PC-3 (cell line): ENCODE measurements at regions of chr14 and their contacts with region 1.

Region 1: DNA sequence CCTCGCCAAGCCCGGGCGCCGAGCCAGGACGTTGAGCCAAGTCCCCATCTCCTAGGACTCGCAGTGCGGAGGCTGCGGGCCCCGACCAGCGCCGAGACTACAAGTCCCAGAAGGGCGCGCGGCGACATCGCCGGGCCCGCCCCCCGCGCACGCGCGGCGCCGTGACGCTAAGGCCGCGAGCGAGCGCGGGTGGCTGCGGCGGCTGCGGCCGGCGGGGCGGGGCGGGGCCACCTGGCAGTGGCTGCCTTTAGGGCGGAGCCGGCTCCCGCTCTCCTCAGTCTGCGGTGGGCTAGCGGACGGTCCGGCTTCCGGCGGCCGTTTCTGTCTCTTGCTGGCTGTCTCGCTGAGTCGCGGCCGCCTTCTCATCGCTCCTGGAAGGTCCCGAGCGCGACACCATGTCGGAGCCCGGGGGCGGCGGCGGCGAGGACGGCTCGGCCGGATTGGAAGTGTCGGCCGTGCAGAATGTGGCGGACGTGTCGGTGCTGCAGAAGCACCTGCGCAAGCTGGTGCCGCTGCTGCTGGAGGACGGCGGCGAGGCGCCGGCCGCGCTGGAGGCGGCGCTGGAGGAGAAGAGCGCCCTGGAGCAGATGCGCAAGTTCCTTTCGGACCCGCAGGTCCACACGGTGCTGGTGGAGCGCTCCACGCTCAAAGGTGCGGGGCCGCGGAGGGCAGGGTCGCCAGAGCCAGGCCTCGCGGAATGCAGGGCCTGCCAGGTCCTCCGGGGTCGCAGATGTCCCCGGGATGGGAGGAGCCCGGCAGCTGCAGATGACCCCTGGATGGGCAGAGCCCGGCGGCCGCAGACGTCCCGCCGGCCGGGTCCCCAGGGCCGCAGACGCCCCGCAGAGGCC is at the start of gene DYNC1H1:
- DNase-seq: peak; percentile 95
- ATAC-seq: peak; percentile 78
- H3K4me3 ChIP-seq: peak within 1 kb of the TSS; percentile 81
- H3K27ac ChIP-seq: peak within 1 kb of the TSS; percentile 56
- H3K4me1 ChIP-seq: peaks cover 43% of the 10 kb centered on the region
- H3K27me3 ChIP-seq: no peaks in the 10 kb centered on the region
- CTCF ChIP-seq: no peak
- total RNA-seq, gene DYNC1H1: 606 and 701 TPM in 2 replicates

Region 2: GRCh38 chr14:101980251-101981099 is 16.0 kb after region 1 on chr14:
- CTCF ChIA-PET with region 1: interaction called, 3 read pairs
- POLR2A ChIA-PET with region 1: interaction called, 4 read pairs
- intact Hi-C with region 1: loop called (anchors 2 kb)
- DNase-seq: peak; percentile 98
- ATAC-seq: peak; percentile 88
- H3K4me3 ChIP-seq: peak overlapping the region; percentile 40
- H3K27ac ChIP-seq: peak overlapping the region; percentile 85
- H3K4me1 ChIP-seq: peaks cover 51% of the 10 kb centered on the region
- H3K27me3 ChIP-seq: no peaks in the 10 kb centered on the region
- CTCF ChIP-seq: no peak

Region 3: DNA sequence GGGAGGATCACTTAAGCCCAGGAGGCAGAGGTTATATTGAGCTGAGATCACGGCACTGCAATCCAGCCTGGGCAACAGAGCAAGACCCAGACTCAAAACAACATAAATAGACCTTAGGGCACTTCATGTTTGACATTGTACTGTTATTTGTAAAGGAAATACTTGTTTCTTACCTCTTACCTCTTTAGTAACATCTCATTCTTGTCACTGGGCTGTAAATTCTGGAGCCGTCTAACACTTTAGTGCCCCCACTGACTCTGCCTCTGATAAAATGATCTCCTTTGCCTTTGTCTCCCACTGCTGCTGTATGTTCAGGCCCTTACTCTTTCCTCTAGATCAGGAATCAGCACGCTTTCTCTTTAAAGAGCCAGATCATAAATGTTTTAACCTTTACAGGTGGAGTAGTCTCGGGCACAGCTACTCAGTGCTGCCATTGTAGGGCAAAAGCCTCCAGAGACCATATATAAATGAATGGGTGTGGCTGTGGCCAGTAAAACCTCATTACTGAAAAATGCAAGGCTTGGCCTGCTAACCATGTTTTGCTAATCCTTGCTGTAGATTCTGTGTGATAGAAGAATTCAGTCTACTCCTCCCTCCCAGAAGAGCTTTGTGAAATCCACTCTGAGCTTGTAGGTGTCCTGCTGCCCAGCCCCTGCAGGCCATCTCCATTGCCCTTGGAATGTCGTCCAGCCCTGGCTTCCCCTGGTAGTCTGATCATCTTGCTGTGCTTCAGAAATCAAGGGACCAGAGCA is 64.1 kb after region 1 on chr14:
- CTCF ChIA-PET with region 1: no interaction called
- POLR2A ChIA-PET with region 1: no interaction called
- intact Hi-C with region 1: loop called (anchors 5 kb)
- DNase-seq: peak; percentile 96
- ATAC-seq: peak; percentile 91
- H3K4me3 ChIP-seq: peak overlapping the region; percentile 25
- H3K27ac ChIP-seq: peak overlapping the region; percentile 83
- H3K4me1 ChIP-seq: peaks cover 43% of the 10 kb centered on the region
- H3K27me3 ChIP-seq: no peaks in the 10 kb centered on the region
- CTCF ChIP-seq: no peak

Region 4: DNA sequence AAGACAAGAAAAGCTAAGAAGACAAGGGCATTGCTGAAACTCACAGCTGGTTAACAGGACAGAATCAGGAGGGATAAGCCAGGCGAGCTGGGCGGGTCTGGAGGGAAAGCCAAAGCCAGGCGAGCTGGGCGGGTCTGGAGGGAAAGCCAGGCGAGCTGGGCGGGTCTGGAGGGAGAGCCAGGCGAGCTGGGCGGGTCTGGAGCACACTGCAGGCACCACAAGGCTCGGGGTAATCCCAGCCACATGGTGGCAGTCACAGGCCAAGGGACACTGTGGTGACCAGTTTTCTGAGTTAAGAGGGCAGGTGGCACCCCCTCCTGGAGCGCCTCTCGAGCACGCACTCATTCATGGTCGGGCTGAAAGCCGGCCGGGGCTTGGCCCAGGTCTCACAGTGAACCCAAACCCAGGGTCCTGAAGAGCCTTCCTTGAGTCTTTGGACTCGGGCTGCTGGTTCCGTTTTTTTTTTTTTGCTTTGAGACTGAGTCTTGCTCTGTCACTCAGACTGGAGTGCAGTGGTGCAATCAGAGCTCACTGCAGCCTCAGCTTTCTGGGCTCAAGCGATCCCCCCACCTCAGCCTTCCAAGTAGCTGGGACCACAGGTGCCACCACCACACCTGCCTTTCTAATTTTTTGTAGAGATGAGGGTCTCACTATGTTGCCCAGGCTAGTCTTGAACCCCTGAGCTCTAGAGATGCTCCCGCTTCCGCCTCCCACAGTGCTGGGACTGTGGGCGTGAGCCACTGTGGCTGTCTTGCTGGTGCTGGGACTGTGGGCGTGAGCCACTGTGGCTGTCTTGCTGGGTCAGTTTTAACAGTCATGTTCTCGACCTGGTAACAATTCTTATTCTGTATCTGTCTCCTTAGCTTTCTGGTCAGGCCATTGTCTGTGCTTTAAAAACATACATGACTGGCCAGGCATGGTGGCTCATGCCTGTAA is 82.1 kb after region 1 on chr14:
- CTCF ChIA-PET with region 1: interaction called, 4 read pairs
- POLR2A ChIA-PET with region 1: no interaction called
- intact Hi-C with region 1: loop called (anchors 1 kb)
- DNase-seq: peak; percentile 71
- ATAC-seq: peak; percentile 95
- H3K4me3 ChIP-seq: no peak overlapping the region
- H3K27ac ChIP-seq: no peak overlapping the region
- H3K4me1 ChIP-seq: no peaks in the 10 kb centered on the region
- H3K27me3 ChIP-seq: no peaks in the 10 kb centered on the region
- CTCF ChIP-seq: peak; percentile 63

Region 5: DNA sequence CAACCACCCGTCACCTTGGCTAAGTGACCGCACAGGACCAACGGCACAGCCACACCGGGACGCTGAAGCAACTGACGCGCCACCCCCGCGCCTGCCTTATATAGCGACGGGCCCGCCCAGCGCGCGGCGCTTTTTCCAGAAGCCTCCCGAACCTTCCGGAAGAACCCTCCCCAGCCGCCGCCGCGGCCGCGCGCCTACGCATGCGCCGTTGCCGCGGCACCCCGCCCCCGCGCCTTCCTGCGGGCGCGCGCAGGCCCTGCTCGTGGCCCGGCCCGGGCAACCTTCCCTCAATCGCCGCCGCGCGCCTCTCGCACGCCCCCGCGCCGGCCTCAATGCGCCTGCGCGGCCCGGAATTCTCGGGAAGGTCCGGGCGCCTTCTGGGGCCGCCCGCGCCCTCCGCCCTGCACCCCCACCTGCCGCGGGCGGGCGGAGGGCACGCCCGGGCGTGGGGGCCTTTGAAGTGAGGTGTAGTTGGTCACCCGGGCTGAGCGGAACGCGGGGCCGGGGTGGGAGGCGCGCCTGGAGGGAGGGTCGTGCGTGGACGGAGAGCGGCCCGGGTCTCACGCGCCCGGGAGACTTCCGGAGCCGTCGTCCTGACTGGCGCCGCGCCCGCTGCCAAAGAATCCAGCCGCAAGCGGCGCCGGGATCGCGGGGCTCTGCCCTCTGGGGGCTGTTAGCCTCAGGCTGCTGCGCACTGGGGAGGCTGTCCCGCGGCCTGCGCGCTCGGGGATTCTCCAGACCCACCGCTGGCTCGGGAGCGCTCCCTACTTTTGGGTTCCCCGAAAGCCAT is 122.6 kb after region 1 on chr14 and contains the start of gene HSP90AA1:
- CTCF ChIA-PET with region 1: no interaction called
- POLR2A ChIA-PET with region 1: interaction called, 12 read pairs
- intact Hi-C with region 1: no loop called
- DNase-seq: peak; percentile 96
- ATAC-seq: peak; percentile 78
- H3K4me3 ChIP-seq: peak within 1 kb of the TSS; percentile 86
- H3K27ac ChIP-seq: peak within 1 kb of the TSS; percentile 79
- H3K4me1 ChIP-seq: peaks cover 28% of the 10 kb centered on the region
- H3K27me3 ChIP-seq: no peaks in the 10 kb centered on the region
- CTCF ChIP-seq: 0 out of 2 replicates have a peak, but pooled peaks have one; percentile 16
- total RNA-seq, gene HSP90AA1: 671 and 785 TPM in 2 replicates

Region 6: GRCh38 chr14:102096214-102097114 is 131.9 kb after region 1 on chr14:
- CTCF ChIA-PET with region 1: no interaction called
- POLR2A ChIA-PET with region 1: no interaction called
- intact Hi-C with region 1: loop called (anchors 1 kb)
- DNase-seq: peak; percentile 85
- ATAC-seq: peak; percentile 87
- H3K4me3 ChIP-seq: no peak overlapping the region
- H3K27ac ChIP-seq: no peak overlapping the region
- H3K4me1 ChIP-seq: peaks cover 28% of the 10 kb centered on the region
- H3K27me3 ChIP-seq: no peaks in the 10 kb centered on the region
- CTCF ChIP-seq: peak; percentile 93